CD4-positive, alpha-beta T cell (primary cell): ENCODE measurements at regions of chr1 and their contacts with region 1.

Region 1: GRCh38 chr1:112882271-112882744 is 73.7 kb downstream of the SLC16A1 start:
- DNase-seq: no peak
- ATAC-seq: no peak
- H3K4me3 ChIP-seq: no peak overlapping the region
- H3K4me3 Mint-ChIP-seq: no peak overlapping the region
- H3K27ac ChIP-seq: no peak overlapping the region
- H3K27ac Mint-ChIP-seq: no peak overlapping the region
- H3K4me1 ChIP-seq: no peaks in the 10 kb centered on the region
- H3K4me1 Mint-ChIP-seq: no peaks in the 10 kb centered on the region
- H3K27me3 ChIP-seq: no peaks in the 10 kb centered on the region
- H3K27me3 Mint-ChIP-seq: peaks cover 12% of the 10 kb centered on the region
- CTCF ChIP-seq: no peak

Region 2: GRCh38 chr1:112955781-112956543 is 73.7 kb after region 1 on chr1 and contains the start of gene SLC16A1:
- CTCF ChIA-PET with region 1: no interaction called
- POLR2A ChIA-PET with region 1: no interaction called
- intact Hi-C with region 1: loop called in 1 of 2 experiments (anchors 5 kb)
- DNase-seq: peak; percentile 78 to 95 (median 86)
- ATAC-seq: peak; percentile 74
- H3K4me3 ChIP-seq: peak within 1 kb of the TSS; percentile 86
- H3K4me3 Mint-ChIP-seq: peak within 1 kb of the TSS; percentile 98
- H3K27ac ChIP-seq: peak within 1 kb of the TSS; percentile 80 to 84
- H3K27ac Mint-ChIP-seq: peak within 1 kb of the TSS; percentile 76
- H3K4me1 ChIP-seq: peaks cover 35% of the 10 kb centered on the region
- H3K4me1 Mint-ChIP-seq: peaks cover 61% of the 10 kb centered on the region
- H3K27me3 ChIP-seq: no peaks in the 10 kb centered on the region
- H3K27me3 Mint-ChIP-seq: no peaks in the 10 kb centered on the region
- CTCF ChIP-seq: peak; percentile 14
- total RNA-seq, gene SLC16A1: 22.9 to 26.6 TPM

Region 3: DNA sequence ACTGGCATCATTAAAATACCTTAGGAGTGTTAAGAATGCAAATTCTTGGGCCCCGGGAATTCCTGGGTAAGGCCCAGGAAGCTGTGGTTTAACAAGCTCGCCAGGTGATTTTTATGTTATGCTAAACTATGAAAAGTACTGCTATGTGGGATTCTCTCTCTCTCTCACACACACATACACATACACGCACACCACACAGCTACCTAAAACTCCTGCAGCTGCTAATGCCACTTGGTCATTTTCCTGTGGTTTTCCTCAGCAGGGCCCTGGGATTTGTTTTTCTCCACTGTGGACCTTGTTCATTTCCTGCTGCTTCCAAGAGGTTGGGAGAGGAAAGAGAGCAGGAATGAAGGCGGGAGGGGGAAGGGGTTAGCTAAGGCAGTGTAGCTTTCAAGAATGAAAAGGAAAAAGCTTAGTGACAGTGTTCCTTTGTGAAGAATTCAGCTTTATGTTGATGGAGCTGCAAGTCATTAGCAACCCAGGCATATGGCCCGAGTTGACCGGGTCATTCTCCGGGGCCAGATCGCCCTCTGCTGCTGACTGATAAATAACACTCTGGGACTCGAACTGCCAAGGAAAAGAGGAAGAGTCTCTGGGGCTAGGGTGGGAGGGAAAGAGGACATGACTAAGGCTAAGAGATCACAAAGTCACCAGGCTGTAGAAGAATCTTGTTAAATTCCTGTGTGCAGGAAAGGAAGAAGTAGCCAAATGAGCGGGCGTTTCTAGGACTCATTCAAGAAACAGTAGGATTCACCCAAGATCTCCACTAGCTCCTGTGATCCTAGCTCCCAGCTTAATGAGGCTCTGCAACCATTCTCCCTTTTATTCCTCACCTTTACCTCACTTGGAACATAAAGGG is 160.2 kb after region 1 on chr1:
- CTCF ChIA-PET with region 1: no interaction called
- POLR2A ChIA-PET with region 1: no interaction called
- intact Hi-C with region 1: loop called in 1 of 2 experiments (anchors 5 kb)
- DNase-seq: peak in 4 of 14 experiments; percentile 25 to 62 (median 48)
- ATAC-seq: no peak
- H3K4me3 ChIP-seq: no peak overlapping the region
- H3K4me3 Mint-ChIP-seq: no peak overlapping the region
- H3K27ac ChIP-seq: no peak overlapping the region
- H3K27ac Mint-ChIP-seq: no peak overlapping the region
- H3K4me1 ChIP-seq: peaks cover 24% of the 10 kb centered on the region
- H3K4me1 Mint-ChIP-seq: peaks cover 16% of the 10 kb centered on the region
- H3K27me3 ChIP-seq: no peaks in the 10 kb centered on the region
- H3K27me3 Mint-ChIP-seq: peaks cover 9% of the 10 kb centered on the region
- CTCF ChIP-seq: no peak

Region 4: DNA sequence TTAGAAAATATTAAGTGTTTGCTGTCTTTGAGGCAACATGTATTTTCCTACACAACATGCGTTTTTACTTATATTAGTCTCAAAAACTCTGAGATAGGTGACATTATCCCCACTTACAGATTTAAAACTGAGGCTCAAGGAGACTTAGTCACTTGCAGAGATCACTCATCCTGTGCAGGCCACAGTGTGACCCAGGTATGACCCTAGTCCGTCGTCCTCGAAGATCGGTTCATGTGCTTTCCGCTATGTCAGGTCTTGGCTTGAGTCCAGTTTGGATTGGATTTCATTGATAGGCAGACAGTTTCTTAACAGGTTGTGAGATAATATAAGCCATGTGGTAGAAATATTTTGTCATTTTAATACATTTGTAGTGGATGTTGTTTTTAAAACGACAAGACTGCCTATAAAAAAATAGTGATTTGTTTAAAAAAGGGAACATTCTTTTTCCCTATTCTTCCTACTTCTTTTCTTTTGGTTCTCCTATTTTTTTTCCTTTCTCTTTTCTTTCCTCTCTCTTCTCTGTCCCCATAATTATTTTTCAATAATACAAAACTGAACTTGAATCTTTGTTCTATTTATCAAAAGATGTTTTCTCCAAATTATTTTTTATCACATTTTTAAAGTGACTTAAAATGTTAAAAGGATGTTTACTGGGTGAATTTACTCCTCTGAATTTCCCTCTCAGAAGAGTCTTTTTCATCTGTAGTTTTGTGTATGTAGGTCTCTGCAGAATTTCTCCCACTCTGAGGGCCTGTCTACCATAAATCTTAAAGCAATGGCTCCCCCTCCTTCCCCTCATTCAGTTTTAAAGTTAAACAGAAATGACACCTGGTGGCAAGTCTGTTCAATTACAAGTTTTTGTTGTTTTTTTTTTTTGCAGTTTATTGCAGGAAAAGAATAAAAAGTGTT is 795.2 kb after region 1 on chr1:
- CTCF ChIA-PET with region 1: no interaction called
- POLR2A ChIA-PET with region 1: no interaction called
- intact Hi-C with region 1: loop called (anchors 5 kb)
- DNase-seq: peak in 4 of 14 experiments; percentile 3 to 58 (median 52)
- ATAC-seq: peak; percentile 49
- H3K4me3 ChIP-seq: no peak overlapping the region
- H3K4me3 Mint-ChIP-seq: no peak overlapping the region
- H3K27ac ChIP-seq: no peak overlapping the region
- H3K27ac Mint-ChIP-seq: no peak overlapping the region
- H3K4me1 ChIP-seq: no peaks in the 10 kb centered on the region
- H3K4me1 Mint-ChIP-seq: no peaks in the 10 kb centered on the region
- H3K27me3 ChIP-seq: no peaks in the 10 kb centered on the region
- H3K27me3 Mint-ChIP-seq: no peaks in the 10 kb centered on the region
- CTCF ChIP-seq: peak; percentile 69